Activated CD4-positive, alpha-beta memory T cell treated with anti-CD3 and anti-CD28 coated beads for 36 hours (primary cell): ENCODE measurements at regions of chr6 and their contacts with region 1.

Region 1: GRCh38 chr6:149746147-149746946 is at the start of gene NUP43:
- DNase-seq: peak; percentile 97
- H3K4me3 Mint-ChIP-seq: peak within 1 kb of the TSS; percentile 98
- H3K27ac Mint-ChIP-seq: peak within 1 kb of the TSS; percentile 85
- H3K4me1 Mint-ChIP-seq: peaks cover 28% of the 10 kb centered on the region
- H3K27me3 Mint-ChIP-seq: no peaks in the 10 kb centered on the region
- total RNA-seq, gene NUP43: 64.3 to 69.8 TPM

Region 2: GRCh38 chr6:149545754-149546528 is 200.4 kb before region 1 on chr6 and contains the start of gene PPIL4:
- CTCF ChIA-PET with region 1: no interaction called
- POLR2A ChIA-PET with region 1: no interaction called
- intact Hi-C with region 1: loop called (anchors 1 kb)
- DNase-seq: peak; percentile 97
- H3K4me3 Mint-ChIP-seq: peak within 1 kb of the TSS; percentile 97
- H3K27ac Mint-ChIP-seq: peak within 1 kb of the TSS; percentile 97
- H3K4me1 Mint-ChIP-seq: peaks cover 38% of the 10 kb centered on the region
- H3K27me3 Mint-ChIP-seq: peaks cover 4% of the 10 kb centered on the region
- total RNA-seq, gene PPIL4: 21.5 to 23.6 TPM

Region 3: GRCh38 chr6:149648148-149649145 is 97.9 kb before region 1 on chr6 and contains the start of gene KATNA1:
- CTCF ChIA-PET with region 1: no interaction called
- POLR2A ChIA-PET with region 1: no interaction called
- intact Hi-C with region 1: loop called (anchors 1 kb)
- DNase-seq: peak; percentile 94
- H3K4me3 Mint-ChIP-seq: peak within 1 kb of the TSS; percentile 79
- H3K27ac Mint-ChIP-seq: peak within 1 kb of the TSS; percentile 81
- H3K4me1 Mint-ChIP-seq: peaks cover 22% of the 10 kb centered on the region
- H3K27me3 Mint-ChIP-seq: no peaks in the 10 kb centered on the region
- total RNA-seq, gene KATNA1: 22.3 to 22.8 TPM